ENCODE measurements at regions of chr16 and their contacts with region 1.

Region 1: GRCh38 chr16:23803591-23804123 is 32.1 kb upstream of the PRKCB start:
- DNase-seq: peak; percentile 84
- H3K4me3 Mint-ChIP-seq: no peak overlapping the region
- H3K27ac Mint-ChIP-seq: no peak overlapping the region
- H3K4me1 Mint-ChIP-seq: peaks cover 12% of the 10 kb centered on the region
- H3K27me3 Mint-ChIP-seq: no peaks in the 10 kb centered on the region

Region 2: GRCh38 chr16:23739516-23739915 is 64.1 kb before region 1 on chr16:
- CTCF ChIA-PET with region 1: interaction called, 4 read pairs
- intact Hi-C with region 1: loop called (anchors 5 kb)
- DNase-seq: no peak
- H3K4me3 Mint-ChIP-seq: no peak overlapping the region
- H3K27ac Mint-ChIP-seq: no peak overlapping the region
- H3K4me1 Mint-ChIP-seq: peaks cover 3% of the 10 kb centered on the region
- H3K27me3 Mint-ChIP-seq: peaks cover 6% of the 10 kb centered on the region

Region 3: DNA sequence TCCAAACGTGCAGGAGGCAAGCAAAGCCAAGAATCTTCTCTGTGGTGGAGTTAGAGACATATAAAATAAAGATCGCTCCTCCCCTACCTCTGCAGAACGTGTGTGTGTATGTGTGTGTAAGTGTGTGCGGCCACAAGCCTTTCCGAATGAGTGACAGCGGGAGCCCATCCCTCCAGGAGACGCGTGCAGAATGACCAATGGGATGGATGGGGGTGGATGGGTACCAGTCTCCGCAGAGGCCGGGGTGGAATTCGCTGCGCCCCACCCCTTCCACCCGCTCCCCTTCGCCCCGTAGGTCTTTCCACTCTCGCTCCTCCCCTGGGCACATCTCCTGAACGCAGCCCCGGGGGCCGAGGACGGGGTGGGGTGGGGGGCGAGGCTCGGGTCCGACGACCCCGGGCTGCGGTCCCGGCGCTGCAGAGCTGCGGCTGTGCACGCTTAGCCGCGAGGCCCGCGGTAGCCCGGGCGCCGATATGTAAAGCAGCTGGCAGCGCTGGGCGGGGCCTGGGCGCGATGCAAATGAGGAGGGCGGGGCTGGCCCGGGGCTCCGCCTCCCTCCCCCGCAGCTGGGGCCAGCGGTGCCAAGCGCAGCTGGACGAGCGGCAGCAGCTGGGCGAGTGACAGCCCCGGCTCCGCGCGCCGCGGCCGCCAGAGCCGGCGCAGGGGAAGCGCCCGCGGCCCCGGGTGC is 31.9 kb after region 1 on chr16 and contains the start of gene PRKCB:
- CTCF ChIA-PET with region 1: interaction called, 5 read pairs
- intact Hi-C with region 1: loop called (anchors 1 kb)
- DNase-seq: peak; percentile 91
- H3K4me3 Mint-ChIP-seq: peak within 1 kb of the TSS; percentile 91
- H3K27ac Mint-ChIP-seq: peak within 1 kb of the TSS; percentile 40
- H3K4me1 Mint-ChIP-seq: peaks cover 57% of the 10 kb centered on the region
- H3K27me3 Mint-ChIP-seq: no peaks in the 10 kb centered on the region
- total RNA-seq, gene PRKCB: 37.1 to 38.9 TPM

Region 4: GRCh38 chr16:23959072-23959751 is 155.6 kb after region 1 on chr16:
- CTCF ChIA-PET with region 1: interaction called, 3 read pairs
- intact Hi-C with region 1: loop called (anchors 5 kb)
- DNase-seq: peak; percentile 32
- H3K4me3 Mint-ChIP-seq: peak overlapping the region; percentile 66
- H3K27ac Mint-ChIP-seq: peak overlapping the region; percentile 81
- H3K4me1 Mint-ChIP-seq: peaks cover 73% of the 10 kb centered on the region
- H3K27me3 Mint-ChIP-seq: no peaks in the 10 kb centered on the region

Region 5: GRCh38 chr16:24036614-24037013 is 233.0 kb after region 1 on chr16:
- CTCF ChIA-PET with region 1: interaction called, 128 read pairs
- intact Hi-C with region 1: loop called (anchors 1 kb)
- DNase-seq: peak; percentile 56
- H3K4me3 Mint-ChIP-seq: no peak overlapping the region
- H3K27ac Mint-ChIP-seq: no peak overlapping the region
- H3K4me1 Mint-ChIP-seq: peaks cover 22% of the 10 kb centered on the region
- H3K27me3 Mint-ChIP-seq: no peaks in the 10 kb centered on the region

Measured in activated naive CD4-positive, alpha-beta T cell treated with anti-CD3 and anti-CD28 coated beads for 36 hours (primary cell).